Activated CD4-positive, alpha-beta T cell treated with anti-CD3 and anti-CD28 coated beads, Interleukin-2, amount 10 ng/mL, durations not matched to agents 24 days and 14 days (primary cell): ENCODE measurements at regions of chr6 and their contacts with region 1.

Region 1: DNA sequence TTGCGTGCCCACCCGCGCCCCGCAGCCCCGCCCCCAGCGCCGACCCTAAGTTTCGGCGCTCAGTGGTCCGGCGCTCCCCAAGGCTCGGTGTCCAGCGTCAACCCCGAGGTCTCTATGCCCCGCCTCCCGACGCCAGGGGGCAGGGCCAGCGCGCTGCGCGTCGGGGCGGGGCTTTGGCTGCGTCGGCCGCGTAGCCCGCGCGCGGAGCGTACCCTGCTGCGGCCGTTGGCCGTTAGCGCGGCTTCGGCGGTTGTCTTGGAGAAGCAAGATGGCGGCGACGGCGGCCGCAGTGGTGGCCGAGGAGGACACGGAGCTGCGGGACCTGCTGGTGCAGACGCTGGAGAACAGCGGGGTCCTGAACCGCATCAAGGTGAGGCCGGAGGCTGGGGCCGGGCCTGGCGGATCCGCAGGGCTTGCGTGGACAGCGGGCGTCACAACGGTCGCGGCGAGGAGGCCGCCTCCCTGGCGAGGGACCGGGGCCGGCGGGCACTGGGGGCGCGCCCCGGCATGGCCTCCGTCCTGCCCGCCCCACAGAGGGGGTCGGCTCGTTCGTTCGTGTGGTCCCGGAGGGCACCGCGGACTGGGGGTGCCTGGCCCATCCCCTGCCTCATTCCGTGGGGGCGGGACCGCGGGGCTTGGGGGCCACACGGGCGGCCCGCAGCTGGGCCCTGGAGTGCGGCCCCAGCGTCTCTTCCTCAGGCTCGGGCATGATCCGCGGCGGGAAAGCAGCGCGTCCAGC is at the start of gene CEP43:
- DNase-seq: peak; percentile 97
- H3K4me3 Mint-ChIP-seq: peak within 1 kb of the TSS; percentile 75
- H3K27ac Mint-ChIP-seq: peak within 1 kb of the TSS; percentile 85
- H3K4me1 Mint-ChIP-seq: peaks cover 33% of the 10 kb centered on the region
- H3K27me3 Mint-ChIP-seq: no peaks in the 10 kb centered on the region
- total RNA-seq, gene CEP43: 21.1 and 23.0 TPM in 2 replicates

Region 2: DNA sequence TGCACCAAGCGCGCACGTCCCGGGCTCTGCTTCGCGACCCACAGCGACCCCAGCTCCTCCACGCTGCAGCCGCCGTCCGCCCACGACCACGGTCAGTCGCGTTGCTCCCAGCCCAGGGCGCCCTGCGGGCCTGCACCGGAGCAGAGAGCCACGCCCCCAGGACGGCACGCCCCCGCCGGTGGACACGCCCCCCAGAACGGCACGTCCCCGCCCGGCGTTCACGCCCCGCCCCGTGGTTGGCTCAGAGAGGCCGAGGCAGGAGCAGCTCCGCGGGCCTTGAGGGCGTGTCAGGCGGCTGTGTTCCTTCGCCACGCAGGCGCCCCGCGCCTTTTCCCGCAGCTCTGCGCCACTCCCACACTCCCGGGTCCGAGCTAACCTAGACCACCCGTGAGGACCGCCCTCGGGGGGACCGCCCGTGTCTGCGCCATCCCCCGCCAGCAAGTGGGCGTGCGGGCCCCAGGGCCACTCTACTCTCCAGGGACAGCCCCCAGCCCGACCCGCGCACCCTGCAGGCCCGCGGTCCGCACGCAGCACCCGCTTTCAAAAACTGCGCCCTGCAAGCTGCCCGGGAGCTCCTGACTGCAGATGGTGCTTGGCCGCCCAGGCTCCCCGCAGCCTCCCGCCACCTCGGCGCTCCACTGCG is 42.7 kb before region 1 on chr6 and contains the start of gene RNASET2:
- intact Hi-C with region 1: loop called (anchors 1 kb)
- DNase-seq: peak; percentile 100
- H3K4me3 Mint-ChIP-seq: peak within 1 kb of the TSS; percentile 95
- H3K27ac Mint-ChIP-seq: peak within 1 kb of the TSS; percentile 98
- H3K4me1 Mint-ChIP-seq: peaks cover 65% of the 10 kb centered on the region
- H3K27me3 Mint-ChIP-seq: no peaks in the 10 kb centered on the region
- total RNA-seq, gene RNASET2: 93.3 and 108 TPM in 2 replicates

Region 3: DNA sequence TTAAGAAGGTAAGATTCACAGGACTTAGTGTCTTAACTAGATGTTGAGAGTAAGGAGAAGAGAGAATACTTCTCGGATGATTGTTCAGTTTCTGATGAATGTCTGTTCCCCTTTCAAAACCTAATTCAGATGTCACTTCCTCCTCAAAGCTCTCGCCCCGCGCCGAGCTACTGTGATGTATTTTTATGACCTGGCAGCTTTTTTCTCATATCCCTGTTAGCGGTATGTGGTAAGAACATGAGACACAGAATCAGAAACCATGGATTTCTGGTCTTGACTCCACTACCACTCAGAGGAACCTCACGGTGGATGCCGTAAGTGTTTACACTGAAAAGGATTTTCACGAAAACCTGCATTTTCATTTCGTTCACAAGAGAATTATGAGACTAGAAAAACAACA is 48.2 kb after region 1 on chr6:
- intact Hi-C with region 1: loop called (anchors 2 kb)
- DNase-seq: peak; percentile 81
- H3K4me3 Mint-ChIP-seq: peak overlapping the region; percentile 35
- H3K27ac Mint-ChIP-seq: peak overlapping the region; percentile 74
- H3K4me1 Mint-ChIP-seq: peaks cover 21% of the 10 kb centered on the region
- H3K27me3 Mint-ChIP-seq: no peaks in the 10 kb centered on the region

Region 4: DNA sequence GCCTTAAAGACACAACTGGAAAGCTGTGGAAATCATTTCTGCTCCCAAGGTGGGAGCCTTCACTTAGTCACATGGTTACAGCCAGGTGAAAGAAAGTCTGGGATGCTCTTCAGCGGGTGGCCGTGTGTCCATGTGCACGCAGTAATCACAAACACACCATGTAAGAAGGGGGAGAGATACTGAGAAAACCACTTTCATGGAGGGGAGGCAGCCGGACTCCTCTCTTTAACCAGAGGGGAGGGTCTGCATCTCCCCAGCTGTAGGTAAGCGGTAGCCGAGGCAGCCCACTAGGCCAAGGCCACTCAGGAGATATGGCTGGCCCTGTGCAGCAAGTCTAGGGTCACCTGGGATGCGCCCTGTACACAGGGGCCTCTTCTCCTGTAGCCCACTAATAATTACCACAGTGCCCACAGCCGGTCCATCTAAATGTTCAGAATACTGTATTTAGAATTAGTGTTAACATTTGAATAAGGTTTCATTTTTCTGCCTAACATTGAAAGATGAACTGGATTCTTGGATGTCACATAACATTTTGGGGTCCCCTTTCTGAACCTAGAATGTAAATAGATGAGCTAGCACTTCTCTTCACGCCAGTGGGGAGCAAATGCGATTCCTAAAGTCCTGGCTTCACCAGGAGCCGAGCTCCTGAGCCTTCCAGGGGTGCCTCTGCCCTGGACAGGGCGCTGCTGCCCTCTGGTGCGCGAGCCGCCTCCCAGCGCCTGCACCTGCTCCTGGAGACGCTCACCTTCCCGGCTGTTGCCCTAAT is 142.5 kb after region 1 on chr6:
- intact Hi-C with region 1: loop called (anchors 2 kb)
- DNase-seq: peak; percentile 80
- H3K4me3 Mint-ChIP-seq: no peak overlapping the region
- H3K27ac Mint-ChIP-seq: no peak overlapping the region
- H3K4me1 Mint-ChIP-seq: peaks cover 5% of the 10 kb centered on the region
- H3K27me3 Mint-ChIP-seq: peaks cover 2% of the 10 kb centered on the region